ENCODE measurements at regions of chr6 and their contacts with region 1.

Region 1: DNA sequence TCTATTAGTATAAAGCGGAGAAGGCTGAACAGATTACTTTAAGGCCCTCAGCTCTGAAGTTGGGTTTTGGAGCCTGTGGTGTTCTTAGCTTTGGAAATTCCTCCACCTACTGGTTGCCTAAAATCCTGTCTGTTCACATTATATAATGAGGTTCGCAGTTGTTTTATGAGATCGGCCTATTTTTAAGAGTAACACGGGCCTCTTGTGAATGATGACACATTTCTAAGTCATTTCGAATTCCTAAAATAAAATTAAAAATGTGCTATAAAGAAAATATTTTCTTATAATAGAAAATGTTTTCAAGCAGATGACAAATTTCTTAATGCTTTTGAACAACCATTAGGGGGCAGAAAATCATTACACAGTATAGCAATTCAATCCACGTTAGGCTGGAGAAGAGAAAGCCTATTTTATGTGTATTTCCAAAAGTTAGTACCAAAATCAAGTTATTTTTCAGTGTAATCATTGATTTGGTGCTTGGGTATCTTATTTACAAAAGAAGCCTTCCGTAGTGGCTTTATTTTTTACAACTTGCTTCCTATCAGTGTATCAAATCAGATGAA is 15.8 kb upstream of the FAM8A1 start:
- DNase-seq: peak; percentile 47 to 68
- ATAC-seq: peak; percentile 72 to 74; a peak in 5 of 6 replicates
- H3K4me3 ChIP-seq: no peak overlapping the region
- H3K27ac ChIP-seq: 0 out of 6 replicates have a peak overlapping the region, but pooled peaks have one; percentile 2 to 22
- H3K4me1 ChIP-seq: peaks cover 7% of the 10 kb centered on the region; the same call in 1 of the 3 replicates
- CTCF ChIP-seq: peak; percentile 99
- EP300 ChIP-seq: no peak
- POLR2A ChIP-seq: no peak
- RAD21 ChIP-seq: peak; percentile 81 to 93

Region 2: GRCh38 chr6:17156112-17156921 is 428.0 kb before region 1 on chr6:
- CTCF ChIA-PET with region 1: interaction called, 35 read pairs
- POLR2A ChIA-PET with region 1: no interaction called
- DNase-seq: peak; percentile 34 to 80
- ATAC-seq: peak; percentile 83 to 87; a peak in 5 of 6 replicates
- H3K4me3 ChIP-seq: no peak overlapping the region
- H3K27ac ChIP-seq: no peak overlapping the region
- H3K4me1 ChIP-seq: peaks cover 7% of the 10 kb centered on the region; the same call in 1 of the 3 replicates
- CTCF ChIP-seq: peak; percentile 87
- EP300 ChIP-seq: no peak
- POLR2A ChIP-seq: no peak
- RAD21 ChIP-seq: peak; percentile 91 to 95

Region 3: GRCh38 chr6:17169291-17169690 is 415.0 kb before region 1 on chr6:
- CTCF ChIA-PET with region 1: interaction called, 13 read pairs
- POLR2A ChIA-PET with region 1: no interaction called
- DNase-seq: no peak
- ATAC-seq: no peak
- H3K4me3 ChIP-seq: no peak overlapping the region
- H3K27ac ChIP-seq: no peak overlapping the region
- H3K4me1 ChIP-seq: no peaks in the 10 kb centered on the region
- CTCF ChIP-seq: no peak
- EP300 ChIP-seq: no peak
- POLR2A ChIP-seq: no peak
- RAD21 ChIP-seq: no peak

Region 4: DNA sequence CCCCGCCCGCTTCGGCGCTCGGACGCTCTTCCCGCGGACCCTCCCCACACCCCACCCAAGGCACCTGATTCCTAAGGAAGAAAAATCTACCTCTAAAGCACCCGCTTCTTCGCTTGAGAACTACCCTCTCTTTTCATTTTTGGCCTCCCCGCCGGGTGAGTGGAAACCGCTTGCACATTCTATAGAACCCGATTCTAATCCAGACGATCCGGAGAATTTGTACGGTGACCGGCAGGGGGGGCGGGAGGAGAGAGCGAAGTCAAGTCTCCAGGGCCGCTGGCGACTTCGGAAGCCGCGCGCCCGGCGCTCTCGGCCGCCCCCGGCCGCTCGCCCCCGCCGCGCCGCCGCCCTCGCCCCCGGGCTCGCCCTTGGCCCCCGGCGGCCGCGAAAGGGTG is 303.2 kb before region 1 on chr6 and contains the start of gene RBM24:
- CTCF ChIA-PET with region 1: interaction called, 14 read pairs
- POLR2A ChIA-PET with region 1: interaction called, 5 read pairs
- DNase-seq: peak in 1 of 2 experiments; percentile 82
- ATAC-seq: peak; percentile 63 to 78
- H3K4me3 ChIP-seq: peak within 1 kb of the TSS; percentile 90
- H3K27ac ChIP-seq: peak within 1 kb of the TSS; percentile 84 to 99
- H3K4me1 ChIP-seq: peaks cover 41% of the 10 kb centered on the region
- CTCF ChIP-seq: peak; percentile 21; the same call in 2 of the 3 replicates
- EP300 ChIP-seq: no peak
- POLR2A ChIP-seq: no peak
- RAD21 ChIP-seq: peak; percentile 40 to 43
- polyA plus RNA-seq, gene RBM24: 21.5 and 27.5 TPM in 2 replicates